Psoas muscle (tissue), 8 donors: ENCODE measurements at regions of chr11 and their contacts with region 1.

Region 1: DNA sequence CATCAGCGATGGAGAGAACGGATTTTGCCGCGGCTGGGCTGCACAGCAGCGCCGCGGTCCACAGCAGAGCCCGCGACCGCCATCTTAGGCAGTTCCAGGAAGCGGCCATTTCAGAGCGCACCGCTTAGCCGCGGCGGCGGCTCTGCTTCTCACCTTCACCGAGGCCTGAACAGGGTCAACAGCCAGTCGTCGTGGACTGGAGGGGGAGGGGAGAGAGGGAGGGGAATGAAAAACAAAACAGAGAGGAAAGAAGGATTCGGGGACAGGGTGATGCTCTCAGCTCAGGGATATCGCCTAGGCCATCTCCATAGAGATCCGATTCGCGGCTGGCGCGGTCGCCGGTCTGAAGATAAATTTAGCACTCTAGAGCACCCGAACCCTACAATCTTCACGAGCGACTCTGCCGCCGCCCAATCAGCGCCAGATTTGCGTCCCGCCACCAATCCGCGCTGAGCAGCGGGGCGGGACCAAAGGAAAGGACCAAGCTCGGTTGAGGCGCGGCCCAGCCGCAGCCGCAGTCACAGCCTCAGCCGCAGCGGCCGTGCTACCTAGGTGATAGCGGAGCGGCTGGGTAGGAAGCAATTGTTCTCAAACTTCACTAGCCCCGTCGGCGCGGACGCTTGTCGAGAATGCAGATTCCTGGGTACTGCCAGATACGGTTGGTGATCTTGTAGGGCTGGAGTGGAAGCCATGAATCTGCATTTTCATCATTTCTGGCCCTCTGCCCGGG is at the start of gene ZBED5:
- DNase-seq: peak; percentile 97 to 98
- ATAC-seq: peak; percentile 93 to 97 (median 96)
- H3K4me3 ChIP-seq: peak within 1 kb of the TSS; percentile 77
- H3K27ac ChIP-seq: peak within 1 kb of the TSS; percentile 92
- H3K4me1 ChIP-seq: peaks cover 43% of the 10 kb centered on the region
- H3K27me3 ChIP-seq: no peaks in the 10 kb centered on the region
- CTCF ChIP-seq: peak; percentile 26
- total RNA-seq, gene ZBED5: 25.5 to 47.8 (median 29.4) TPM

Region 2: DNA sequence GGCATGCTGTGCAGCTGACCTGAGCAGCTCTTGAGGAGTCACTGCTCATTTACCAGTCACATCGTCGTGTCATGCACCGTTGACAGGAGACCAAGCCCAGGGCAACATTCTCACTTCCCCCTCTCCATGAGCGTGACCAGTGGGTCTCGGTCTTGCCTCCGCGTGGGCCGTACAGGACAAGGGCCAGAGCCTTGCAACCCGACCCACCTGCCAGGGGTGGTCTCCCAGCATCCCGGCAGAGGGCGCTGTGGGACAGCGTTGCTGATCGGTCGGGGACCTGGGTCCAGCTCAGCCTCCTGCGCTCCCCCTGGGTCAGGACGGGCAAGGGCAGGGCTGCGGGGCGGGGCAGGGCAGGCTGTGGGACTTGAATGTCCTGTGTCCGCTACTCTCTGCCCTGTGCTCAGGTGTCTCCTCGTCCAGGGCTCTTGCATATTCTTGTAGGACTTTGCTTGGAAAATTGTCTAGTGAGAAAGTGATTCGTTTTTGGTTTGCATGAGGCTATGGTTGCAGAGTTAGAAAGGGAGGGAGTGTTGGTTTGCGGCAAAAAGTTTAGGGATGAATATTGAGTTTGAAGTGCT is 65.4 kb before region 1 on chr11:
- intact Hi-C with region 1: no loop called
- DNase-seq: peak; percentile 91 to 95
- ATAC-seq: peak; percentile 90 to 94 (median 94)
- H3K4me3 ChIP-seq: peak overlapping the region; percentile 44
- H3K27ac ChIP-seq: no peak overlapping the region
- H3K4me1 ChIP-seq: peaks cover 5% of the 10 kb centered on the region
- H3K27me3 ChIP-seq: no peaks in the 10 kb centered on the region
- CTCF ChIP-seq: peak; percentile 86

Region 3: DNA sequence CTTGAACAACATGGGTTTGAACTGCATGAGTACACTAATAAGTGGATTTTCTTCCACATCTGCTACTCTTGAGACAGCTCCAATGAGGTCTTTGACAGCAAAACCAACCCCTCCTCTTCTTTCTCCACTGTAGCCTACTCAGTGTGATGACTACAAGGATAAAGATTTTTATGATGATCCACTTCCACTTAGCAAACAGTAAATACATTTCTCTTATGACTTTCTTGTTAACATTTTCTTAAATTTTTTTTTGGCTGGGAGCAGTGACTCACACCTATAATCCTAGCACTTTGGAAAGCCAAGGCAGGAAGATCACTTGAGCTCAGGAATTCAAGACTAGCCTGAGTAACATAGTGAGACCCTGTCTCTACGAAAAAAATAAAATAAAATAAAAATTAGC is 39.3 kb before region 1 on chr11:
- intact Hi-C with region 1: loop called in 1 of 2 experiments (anchors 5 kb)
- DNase-seq: no peak
- ATAC-seq: no peak
- H3K4me3 ChIP-seq: no peak overlapping the region
- H3K27ac ChIP-seq: no peak overlapping the region
- H3K4me1 ChIP-seq: no peaks in the 10 kb centered on the region
- H3K27me3 ChIP-seq: no peaks in the 10 kb centered on the region
- CTCF ChIP-seq: no peak